ENCODE measurements at regions of chr12 and their contacts with region 1.

Region 1: DNA sequence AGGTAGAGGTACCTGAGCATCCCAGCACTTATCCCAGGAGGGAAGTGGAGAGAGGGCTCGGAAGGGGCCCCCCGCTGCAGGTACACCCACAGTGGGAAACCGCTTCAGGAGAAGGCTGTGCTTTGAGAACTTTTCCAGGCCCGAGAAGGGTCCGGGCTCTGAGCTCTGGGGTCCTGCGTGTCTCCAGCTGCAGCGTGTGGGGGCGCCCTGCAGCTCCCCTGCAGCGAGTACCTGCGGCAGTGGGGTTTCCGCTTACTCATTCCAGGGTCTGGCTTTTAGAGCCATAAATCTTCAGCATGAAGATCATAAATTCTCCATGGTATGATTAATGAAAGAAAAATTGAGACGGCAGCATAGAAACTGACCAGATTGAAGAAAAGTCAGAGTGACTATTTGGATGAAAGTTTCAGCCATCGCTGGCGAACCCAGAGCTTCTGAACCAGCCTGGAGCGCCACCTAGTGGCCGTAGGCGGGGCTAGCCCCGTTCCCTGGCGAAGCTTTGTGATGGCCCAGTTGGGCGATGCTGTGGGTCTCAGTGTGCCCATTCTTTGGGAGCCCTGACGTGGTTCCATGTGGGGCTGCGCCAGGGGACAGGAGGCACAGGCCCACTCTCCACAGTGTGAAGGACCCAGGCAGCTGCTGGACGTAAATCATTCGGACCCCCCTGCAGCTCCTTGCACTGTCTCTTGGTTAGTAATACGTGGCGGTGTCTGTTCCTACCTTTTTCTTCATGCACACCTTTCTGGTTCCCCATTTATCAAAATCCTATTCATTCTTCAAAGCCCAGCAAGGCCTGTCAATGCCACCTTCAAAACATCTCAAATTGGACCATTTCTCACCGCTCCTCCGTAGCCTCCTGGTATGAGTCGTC is 198.2 kb downstream of the TSPAN9 start:
- DNase-seq: peak; percentile 87
- CTCF ChIP-seq: peak; percentile 89

Region 2: GRCh38 chr12:3073438-3074250 is 201.8 kb before region 1 on chr12:
- CTCF ChIA-PET with region 1: interaction called, 70 read pairs
- POLR2A ChIA-PET with region 1: no interaction called
- DNase-seq: peak; percentile 88
- CTCF ChIP-seq: peak; percentile 99

Region 3: DNA sequence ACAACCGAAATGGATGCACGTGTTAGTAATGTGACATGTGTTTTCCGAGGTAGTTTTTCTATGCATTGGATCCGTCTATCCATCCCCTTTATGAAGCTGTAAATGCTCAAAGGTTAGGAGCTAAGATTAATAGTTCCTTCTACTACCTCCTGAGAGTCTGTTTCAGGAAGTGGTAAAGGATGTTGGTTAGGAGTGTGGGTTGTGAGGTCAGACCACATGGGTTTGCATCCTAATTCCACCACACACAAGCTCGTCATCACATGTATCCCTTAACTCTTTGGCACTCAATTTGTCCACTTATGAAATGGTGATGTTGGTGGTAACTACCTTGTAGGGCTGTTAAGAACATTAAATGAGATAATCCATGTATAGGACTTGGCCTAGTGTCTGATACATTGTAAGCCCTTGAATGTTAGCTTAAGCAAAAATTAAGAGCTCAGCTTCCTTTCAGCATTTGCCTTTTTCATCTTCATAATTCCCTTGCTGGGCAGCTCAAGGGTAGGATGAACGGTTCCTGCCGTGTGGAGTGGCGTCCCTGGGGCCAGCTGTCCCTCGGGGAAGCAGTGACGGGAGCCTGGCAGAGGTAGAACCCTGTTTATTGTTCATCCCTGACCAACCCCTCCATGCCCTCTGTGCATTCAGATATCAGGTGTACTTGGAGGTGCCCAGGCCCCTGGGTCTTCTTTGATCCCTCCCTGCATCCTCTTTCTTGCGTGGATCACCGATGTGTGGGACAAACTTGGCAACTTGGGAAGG is 145.9 kb before region 1 on chr12:
- CTCF ChIA-PET with region 1: interaction called, 128 read pairs
- POLR2A ChIA-PET with region 1: no interaction called
- DNase-seq: no peak
- CTCF ChIP-seq: no peak

Region 4: DNA sequence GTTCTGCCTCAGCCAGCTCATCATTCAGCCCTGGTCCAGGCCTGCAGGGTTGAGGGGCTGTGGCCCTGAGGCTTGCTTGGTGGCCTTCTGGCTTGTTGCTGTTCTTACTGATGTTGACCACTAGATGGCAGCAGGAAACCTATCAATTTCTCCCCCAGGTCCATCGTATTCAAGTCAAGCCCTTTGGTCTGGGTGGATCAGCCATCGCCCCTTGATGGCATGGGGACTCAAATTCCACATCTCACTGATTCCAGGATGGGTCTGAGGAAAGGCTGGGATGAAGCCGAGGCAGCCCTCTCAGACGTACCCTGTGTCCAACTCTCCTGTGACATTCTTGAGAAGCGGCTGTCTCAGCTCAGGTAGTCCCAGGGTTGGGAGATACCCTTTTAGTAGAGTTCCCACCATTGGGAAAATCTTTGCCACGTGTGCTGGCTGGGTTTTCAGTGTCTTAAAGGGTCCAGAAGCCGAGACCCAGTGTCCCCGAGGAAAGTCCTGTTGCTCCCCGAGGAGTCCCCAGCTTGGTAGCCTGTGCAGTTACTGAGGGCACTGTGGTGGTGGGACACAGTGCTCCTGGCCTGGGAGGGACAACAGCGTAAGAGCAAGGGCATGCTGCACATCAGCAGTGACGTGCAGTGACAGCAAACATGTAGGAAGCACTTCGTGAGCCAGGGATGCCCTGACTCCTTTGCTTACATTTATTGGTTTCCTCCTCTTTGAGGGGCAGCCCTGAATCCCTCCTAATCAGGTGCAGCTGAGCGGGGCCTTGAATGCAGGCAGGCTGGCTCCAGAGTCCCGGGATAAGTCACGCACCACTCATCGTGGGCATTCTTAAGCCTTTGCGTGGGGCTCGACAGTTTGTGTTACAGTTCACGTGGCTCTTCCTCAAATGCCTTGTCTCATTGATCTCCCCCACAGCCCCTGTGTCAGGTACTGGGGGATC is 139.6 kb before region 1 on chr12:
- CTCF ChIA-PET with region 1: interaction called, 128 read pairs
- POLR2A ChIA-PET with region 1: no interaction called
- DNase-seq: peak; percentile 86
- CTCF ChIP-seq: peak; percentile 84